Testis (tissue), 5 donors: ENCODE measurements at regions of chr5 and their contacts with region 1.

Region 1: GRCh38 chr5:154754460-154755360 is 467 bp upstream of the LARP1 start:
- DNase-seq: peak; percentile 100
- H3K4me3 ChIP-seq: peak overlapping the region; percentile 90 to 99
- H3K27ac ChIP-seq: peak overlapping the region; percentile 99
- H3K4me1 ChIP-seq: peaks cover 27% of the 10 kb centered on the region
- H3K27me3 ChIP-seq: no peaks in the 10 kb centered on the region
- CTCF ChIP-seq: peak; percentile 17 to 59 (median 21)
- POLR2A ChIP-seq: peak; percentile 58

Region 2: GRCh38 chr5:154683101-154683880 is 71.4 kb before region 1 on chr5:
- intact Hi-C with region 1: loop called (anchors 10 kb)
- DNase-seq: no peak
- H3K4me3 ChIP-seq: peak overlapping the region; percentile 52 to 69
- H3K27ac ChIP-seq: peak overlapping the region; percentile 72 to 82
- H3K4me1 ChIP-seq: no peaks in the 10 kb centered on the region
- H3K27me3 ChIP-seq: no peaks in the 10 kb centered on the region
- CTCF ChIP-seq: no peak
- POLR2A ChIP-seq: no peak

Region 3: GRCh38 chr5:154794525-154795234 is 40.0 kb after region 1 on chr5:
- intact Hi-C with region 1: no loop called
- DNase-seq: no peak
- H3K4me3 ChIP-seq: no peak overlapping the region
- H3K27ac ChIP-seq: peak overlapping the region in 1 of 2 donors; percentile 50
- H3K4me1 ChIP-seq: peaks cover 11% of the 10 kb centered on the region
- H3K27me3 ChIP-seq: no peaks in the 10 kb centered on the region
- CTCF ChIP-seq: no peak
- POLR2A ChIP-seq: no peak

Region 4: GRCh38 chr5:154857530-154858296 is 103.0 kb after region 1 on chr5:
- intact Hi-C with region 1: loop called (anchors 5 kb)
- DNase-seq: peak; percentile 98
- H3K4me3 ChIP-seq: peak overlapping the region; percentile 92 to 94
- H3K27ac ChIP-seq: peak overlapping the region; percentile 93 to 100
- H3K4me1 ChIP-seq: peaks cover 28% of the 10 kb centered on the region
- H3K27me3 ChIP-seq: no peaks in the 10 kb centered on the region
- CTCF ChIP-seq: no peak
- POLR2A ChIP-seq: peak; percentile 3